ENCODE measurements at regions of chr5 and their contacts with region 1.

Region 1: GRCh38 chr5:31866166-31866565 is 227.2 kb downstream of the PDZD2 start:
- DNase-seq: peak in 6 of 9 donors; percentile 10 to 61 (median 48)
- ATAC-seq: peak; percentile 52
- H3K4me3 ChIP-seq: no peak overlapping the region
- H3K4me3 Mint-ChIP-seq: peak overlapping the region in 9 of 10 donors; percentile 74 to 92 (median 86)
- H3K27ac ChIP-seq: peak overlapping the region; percentile 52
- H3K27ac Mint-ChIP-seq: peak overlapping the region in 8 of 9 donors; percentile 83 to 99 (median 96)
- H3K4me1 ChIP-seq: peaks cover 0 to 58% of the 10 kb centered on the region in 2 donors
- H3K4me1 Mint-ChIP-seq: peaks cover 8 to 87% (median 67%) of the 10 kb centered on the region in 7 donors
- H3K27me3 ChIP-seq: no peaks in the 10 kb centered on the region
- H3K27me3 Mint-ChIP-seq: peaks cover 0 to 8% (median 0%) of the 10 kb centered on the region in 5 donors

Region 2: DNA sequence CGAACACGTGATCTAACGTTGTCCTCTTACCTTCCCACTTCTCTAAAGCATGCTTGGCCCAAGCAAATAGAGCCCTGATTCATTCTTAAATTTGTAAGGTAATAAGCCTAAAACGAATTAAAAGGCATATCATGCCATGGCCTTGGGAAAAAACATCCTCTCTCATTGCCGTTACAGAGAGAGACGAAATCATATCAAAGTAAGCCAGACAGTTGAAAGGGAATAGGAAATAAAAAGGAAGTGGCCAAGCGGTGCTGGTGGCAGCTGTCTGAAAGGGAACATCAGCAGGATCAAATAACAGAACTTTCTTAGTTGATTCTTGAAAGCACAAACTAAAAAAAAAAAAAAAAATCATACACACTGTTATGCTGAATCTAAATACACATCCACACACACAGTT is 721.8 kb before region 1 on chr5:
- CTCF ChIA-PET with region 1: no interaction called
- POLR2A ChIA-PET with region 1: no interaction called
- intact Hi-C with region 1: no loop called
- DNase-seq: no peak
- ATAC-seq: no peak
- H3K4me3 ChIP-seq: no peak overlapping the region
- H3K4me3 Mint-ChIP-seq: no peak overlapping the region
- H3K27ac ChIP-seq: no peak overlapping the region
- H3K27ac Mint-ChIP-seq: no peak overlapping the region
- H3K4me1 ChIP-seq: no peaks in the 10 kb centered on the region
- H3K4me1 Mint-ChIP-seq: no peaks in the 10 kb centered on the region
- H3K27me3 ChIP-seq: no peaks in the 10 kb centered on the region
- H3K27me3 Mint-ChIP-seq: peaks cover 0 to 6% (median 3%) of the 10 kb centered on the region in 5 donors

Region 3: GRCh38 chr5:31854181-31855133 is 11.7 kb before region 1 on chr5:
- CTCF ChIA-PET with region 1: no interaction called
- POLR2A ChIA-PET with region 1: interaction called, 31 read pairs
- intact Hi-C with region 1: loop called in 1 of 2 experiments (anchors 1 kb)
- DNase-seq: peak in 4 of 9 donors; percentile 10 to 26 (median 24)
- ATAC-seq: peak; percentile 43
- H3K4me3 ChIP-seq: peak overlapping the region; percentile 63
- H3K4me3 Mint-ChIP-seq: peak overlapping the region; percentile 76 to 97 (median 88)
- H3K27ac ChIP-seq: peak overlapping the region; percentile 66
- H3K27ac Mint-ChIP-seq: peak overlapping the region in 8 of 9 donors; percentile 81 to 93 (median 85)
- H3K4me1 ChIP-seq: no peaks in the 10 kb centered on the region
- H3K4me1 Mint-ChIP-seq: peaks cover 9 to 44% (median 28%) of the 10 kb centered on the region in 7 donors
- H3K27me3 ChIP-seq: no peaks in the 10 kb centered on the region
- H3K27me3 Mint-ChIP-seq: peaks cover 0 to 45% (median 22%) of the 10 kb centered on the region in 5 donors

Region 4: GRCh38 chr5:31911291-31912265 is 45.4 kb after region 1 on chr5:
- CTCF ChIA-PET with region 1: no interaction called
- POLR2A ChIA-PET with region 1: no interaction called
- intact Hi-C with region 1: loop called in 1 of 2 experiments (anchors 5 kb)
- DNase-seq: no peak
- ATAC-seq: no peak
- H3K4me3 ChIP-seq: no peak overlapping the region
- H3K4me3 Mint-ChIP-seq: no peak overlapping the region
- H3K27ac ChIP-seq: no peak overlapping the region
- H3K27ac Mint-ChIP-seq: no peak overlapping the region
- H3K4me1 ChIP-seq: peaks cover 0 to 6% of the 10 kb centered on the region in 2 donors
- H3K4me1 Mint-ChIP-seq: peaks cover 0 to 27% (median 22%) of the 10 kb centered on the region in 7 donors
- H3K27me3 ChIP-seq: no peaks in the 10 kb centered on the region
- H3K27me3 Mint-ChIP-seq: no peaks in the 10 kb centered on the region

Measured in naive thymus-derived CD4-positive, alpha-beta T cell (primary cell).